Mammary epithelial cell (primary cell): ENCODE measurements at regions of chr19 and their contacts with region 1.

Region 1: DNA sequence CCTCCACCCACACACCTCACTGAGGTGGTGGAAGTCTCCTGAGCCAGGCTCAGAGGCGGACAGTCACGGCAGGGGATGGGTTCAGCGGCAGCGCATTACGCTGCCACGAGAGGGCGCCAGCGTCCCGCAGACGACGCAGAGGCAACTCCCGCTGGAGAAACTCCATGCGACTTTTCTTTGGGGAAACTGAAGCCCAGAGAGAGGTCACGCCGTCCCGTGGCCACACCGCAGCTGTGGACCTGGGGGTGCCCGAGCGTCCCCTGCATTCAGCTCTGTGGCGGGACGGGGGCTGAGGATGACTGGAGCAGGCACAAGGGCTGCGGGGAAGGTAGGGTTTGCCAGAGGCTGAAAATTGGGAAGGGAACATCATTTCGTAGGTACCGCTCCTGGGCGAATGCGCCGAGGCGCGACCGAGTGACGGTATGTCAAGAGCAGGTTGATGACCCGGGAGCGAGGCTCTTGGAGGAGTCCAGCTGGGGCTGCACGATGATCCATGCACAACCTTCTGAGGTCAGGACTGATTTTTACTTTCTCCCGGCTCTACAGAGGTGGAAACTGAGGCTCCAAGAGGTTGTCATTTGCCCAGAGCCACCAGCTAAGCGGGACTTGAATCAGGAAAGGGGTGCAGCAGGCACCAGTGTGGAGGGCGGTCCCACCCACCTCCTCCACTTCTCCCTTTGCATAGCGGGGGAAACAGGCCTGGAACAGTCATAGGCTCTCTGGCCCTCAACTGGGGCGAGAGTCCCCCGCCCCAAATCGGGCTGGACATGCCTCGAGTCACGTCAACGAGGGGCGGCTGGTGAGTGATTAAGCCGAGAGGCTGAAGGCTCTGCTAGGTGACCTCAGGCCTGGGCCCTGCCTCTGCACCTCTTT is 690 bp upstream of the ARRDC2 start:
- DNase-seq: peak; percentile 69
- H3K4me3 ChIP-seq: peak overlapping the region; percentile 23 to 43 (median 39)
- H3K27ac ChIP-seq: peak overlapping the region; percentile 9
- H3K4me1 ChIP-seq: peaks cover 12% of the 10 kb centered on the region
- H3K27me3 ChIP-seq: no peaks in the 10 kb centered on the region
- CTCF ChIP-seq: peak; percentile 95 to 98

Region 2: GRCh38 chr19:17938092-17938845 is 69.0 kb before region 1 on chr19:
- CTCF ChIA-PET with region 1: interaction called, 16 read pairs
- dilution Hi-C with region 1: no loop called
- in situ Hi-C with region 1: no loop called
- intact Hi-C with region 1: no loop called
- DNase-seq: peak; percentile 90
- H3K4me3 ChIP-seq: no peak overlapping the region
- H3K27ac ChIP-seq: no peak overlapping the region
- H3K4me1 ChIP-seq: peaks cover 11% of the 10 kb centered on the region
- H3K27me3 ChIP-seq: no peaks in the 10 kb centered on the region
- CTCF ChIP-seq: peak; percentile 93 to 99

Region 3: GRCh38 chr19:17967257-17968051 is 39.8 kb before region 1 on chr19:
- CTCF ChIA-PET with region 1: no interaction called
- dilution Hi-C with region 1: no loop called
- in situ Hi-C with region 1: no loop called
- intact Hi-C with region 1: no loop called
- DNase-seq: no peak
- H3K4me3 ChIP-seq: no peak overlapping the region
- H3K27ac ChIP-seq: no peak overlapping the region
- H3K4me1 ChIP-seq: no peaks in the 10 kb centered on the region
- H3K27me3 ChIP-seq: peaks cover 18% of the 10 kb centered on the region
- CTCF ChIP-seq: no peak

Region 4: GRCh38 chr19:18058208-18059030 is 51.1 kb after region 1 on chr19:
- CTCF ChIA-PET with region 1: no interaction called
- dilution Hi-C with region 1: no loop called
- in situ Hi-C with region 1: loop called (anchors 5 kb)
- intact Hi-C with region 1: loop called (anchors 1 kb)
- DNase-seq: peak; percentile 42
- H3K4me3 ChIP-seq: no peak overlapping the region
- H3K27ac ChIP-seq: no peak overlapping the region
- H3K4me1 ChIP-seq: peaks cover 3% of the 10 kb centered on the region
- H3K27me3 ChIP-seq: peaks cover 2% of the 10 kb centered on the region
- CTCF ChIP-seq: peak; percentile 51 to 89

Region 5: GRCh38 chr19:18097217-18097992 is 90.1 kb after region 1 on chr19 and contains the start of gene MAST3:
- CTCF ChIA-PET with region 1: no interaction called
- dilution Hi-C with region 1: no loop called
- in situ Hi-C with region 1: no loop called
- intact Hi-C with region 1: no loop called
- DNase-seq: peak; percentile 74
- H3K4me3 ChIP-seq: peak within 1 kb of the TSS; percentile 47 to 59 (median 48)
- H3K27ac ChIP-seq: no peak within 1 kb of the TSS
- H3K4me1 ChIP-seq: peaks cover 24% of the 10 kb centered on the region
- H3K27me3 ChIP-seq: no peaks in the 10 kb centered on the region
- CTCF ChIP-seq: no peak
- total RNA-seq, gene MAST3: 3.8 to 7.0 TPM

Region 6: GRCh38 chr19:18167975-18168645 is 160.8 kb after region 1 on chr19:
- CTCF ChIA-PET with region 1: no interaction called
- dilution Hi-C with region 1: no loop called
- in situ Hi-C with region 1: no loop called
- intact Hi-C with region 1: loop called (anchors 5 kb)
- DNase-seq: no peak
- H3K4me3 ChIP-seq: no peak overlapping the region
- H3K27ac ChIP-seq: no peak overlapping the region
- H3K4me1 ChIP-seq: no peaks in the 10 kb centered on the region
- H3K27me3 ChIP-seq: no peaks in the 10 kb centered on the region
- CTCF ChIP-seq: peak; percentile 66 to 76

Region 7: GRCh38 chr19:18408053-18408476 is 400.8 kb after region 1 on chr19:
- CTCF ChIA-PET with region 1: no interaction called
- dilution Hi-C with region 1: no loop called
- in situ Hi-C with region 1: no loop called
- intact Hi-C with region 1: loop called (anchors 1 kb)
- DNase-seq: no peak
- H3K4me3 ChIP-seq: no peak overlapping the region
- H3K27ac ChIP-seq: no peak overlapping the region
- H3K4me1 ChIP-seq: peaks cover 3% of the 10 kb centered on the region
- H3K27me3 ChIP-seq: no peaks in the 10 kb centered on the region
- CTCF ChIP-seq: peak; percentile 20 to 38